ENCODE measurements at regions of chr7 and their contacts with region 1.

Region 1: DNA sequence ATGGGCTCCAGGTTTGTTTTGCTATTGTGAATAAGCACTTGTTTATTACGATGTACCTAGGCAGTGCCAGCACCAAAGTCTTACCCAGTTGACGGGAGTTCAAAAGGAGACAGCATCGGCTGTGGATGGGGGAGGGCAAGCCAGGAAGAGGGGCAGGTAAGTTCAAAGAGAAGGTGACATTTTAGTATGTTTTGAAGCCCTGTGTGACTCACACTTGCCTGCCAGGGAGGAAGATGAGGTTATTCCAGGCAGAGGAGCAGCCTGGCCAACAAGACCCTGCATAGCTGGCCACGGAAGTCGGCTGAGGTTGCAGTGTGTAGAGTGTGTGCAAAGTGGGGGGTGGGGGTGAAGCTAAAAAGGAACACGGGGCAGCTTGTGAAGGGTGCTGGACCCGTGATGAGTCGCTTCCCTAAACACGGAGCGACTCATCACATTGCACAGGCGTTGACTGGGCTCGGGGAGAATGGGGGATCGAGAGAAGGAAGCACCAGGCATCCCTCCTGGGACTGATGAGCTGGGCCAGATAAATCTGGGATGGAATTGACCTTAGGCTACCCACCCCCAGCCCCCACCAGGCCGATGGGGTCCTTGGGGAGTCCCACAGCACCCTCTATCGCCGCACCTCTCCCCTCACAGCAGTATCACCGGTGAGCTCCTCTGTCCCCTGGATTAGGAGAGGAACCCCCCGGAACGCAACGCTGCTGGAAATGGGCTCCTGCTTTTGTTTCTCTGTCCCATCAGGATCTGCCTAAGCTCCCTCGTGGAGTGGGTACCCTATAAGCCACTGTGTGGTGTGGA is 97.9 kb upstream of the IKZF1 start:
- DNase-seq: peak; percentile 65
- H3K4me3 Mint-ChIP-seq: peak overlapping the region; percentile 68
- H3K27ac Mint-ChIP-seq: peak overlapping the region; percentile 93
- H3K4me1 Mint-ChIP-seq: peaks cover 98% of the 10 kb centered on the region
- H3K27me3 Mint-ChIP-seq: no peaks in the 10 kb centered on the region

Region 2: DNA sequence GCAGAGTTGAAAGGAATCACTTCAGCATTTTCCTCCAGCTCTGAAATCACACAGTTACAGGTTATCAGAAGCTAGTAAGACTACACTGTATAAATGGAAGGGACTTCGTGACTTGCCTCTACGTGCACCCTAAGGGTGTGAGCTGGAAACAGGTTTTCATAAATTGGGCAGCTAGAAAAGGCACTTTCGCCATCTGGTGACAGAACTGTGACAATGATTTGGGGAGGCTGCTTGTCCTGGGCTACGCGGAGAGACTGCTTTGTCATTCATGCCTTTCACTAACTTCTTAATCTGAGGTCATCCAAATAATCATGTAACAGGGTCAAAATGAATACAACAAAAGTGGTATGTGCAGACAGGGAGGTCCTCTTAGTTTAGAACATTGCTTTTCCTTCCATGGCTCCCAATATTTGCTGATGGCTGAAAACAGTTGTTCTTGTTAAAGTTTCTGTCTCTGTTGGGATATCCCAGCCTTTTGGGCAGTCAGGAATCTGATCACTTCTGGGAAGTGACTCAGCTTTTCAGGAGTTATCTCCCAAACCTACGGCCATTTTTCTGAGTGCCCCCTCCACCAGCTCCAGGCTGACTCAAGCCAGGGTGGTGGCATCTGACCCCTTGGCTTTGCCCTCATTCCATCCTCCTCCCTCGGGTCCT is 415.4 kb before region 1 on chr7:
- intact Hi-C with region 1: no loop called
- DNase-seq: no peak
- H3K4me3 Mint-ChIP-seq: no peak overlapping the region
- H3K27ac Mint-ChIP-seq: no peak overlapping the region
- H3K4me1 Mint-ChIP-seq: no peaks in the 10 kb centered on the region
- H3K27me3 Mint-ChIP-seq: peaks cover 2% of the 10 kb centered on the region

Region 3: DNA sequence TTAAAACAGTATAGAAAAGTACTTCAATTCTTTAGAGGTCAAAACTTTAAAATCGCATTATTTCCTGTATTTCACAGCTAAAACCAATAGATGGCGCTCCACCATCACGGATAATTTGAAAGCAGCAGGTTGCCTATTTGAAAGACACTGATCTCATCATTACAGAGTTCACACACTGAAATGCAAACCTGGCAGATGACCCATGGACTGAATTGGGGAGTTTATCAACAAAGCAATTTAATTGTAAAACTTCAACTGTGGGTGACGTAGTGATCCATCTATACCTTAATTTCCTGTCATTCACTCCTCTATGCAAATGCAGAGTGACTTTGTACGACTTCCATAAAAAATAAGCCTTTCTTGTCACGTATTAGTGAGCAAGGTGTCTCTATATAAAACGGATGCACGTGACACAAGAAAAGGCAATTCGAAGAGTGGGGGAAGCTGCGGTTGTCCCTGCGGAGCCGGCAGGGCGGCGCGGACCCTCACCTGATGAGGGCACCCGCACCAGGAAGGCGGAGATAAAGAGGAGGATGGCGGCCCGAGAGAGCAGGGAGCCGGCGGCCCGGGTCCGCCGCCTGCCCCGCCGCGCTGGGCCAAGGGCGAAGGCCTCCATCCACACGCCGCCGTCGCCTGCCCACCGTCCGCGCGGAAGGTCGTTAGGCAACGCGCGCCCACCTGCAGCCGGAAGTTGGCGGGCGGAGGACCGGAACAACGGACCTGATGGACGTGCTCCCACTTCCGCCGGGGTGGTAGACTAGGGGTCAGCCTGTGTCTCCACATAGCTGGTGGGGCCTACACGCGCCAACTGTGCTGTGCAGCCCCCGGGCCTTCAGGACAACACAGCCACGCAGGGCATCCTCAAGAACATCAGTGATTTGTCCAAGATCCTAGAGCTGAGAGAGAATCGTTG is 113.8 kb before region 1 on chr7 and contains the start of gene ZPBP:
- intact Hi-C with region 1: loop called (anchors 5 kb)
- DNase-seq: peak; percentile 43
- H3K4me3 Mint-ChIP-seq: peak within 1 kb of the TSS; percentile 81
- H3K27ac Mint-ChIP-seq: peak within 1 kb of the TSS; percentile 68
- H3K4me1 Mint-ChIP-seq: peaks cover 4% of the 10 kb centered on the region
- H3K27me3 Mint-ChIP-seq: peaks cover 9% of the 10 kb centered on the region
- total RNA-seq, gene ZPBP: not detected in 2 replicates

Region 4: GRCh38 chr7:50227726-50228125 is 21.1 kb after region 1 on chr7:
- intact Hi-C with region 1: loop called (anchors 1 kb)
- DNase-seq: no peak
- H3K4me3 Mint-ChIP-seq: peak overlapping the region; percentile 52
- H3K27ac Mint-ChIP-seq: peak overlapping the region; percentile 91
- H3K4me1 Mint-ChIP-seq: peaks cover 46% of the 10 kb centered on the region
- H3K27me3 Mint-ChIP-seq: no peaks in the 10 kb centered on the region

Region 5: DNA sequence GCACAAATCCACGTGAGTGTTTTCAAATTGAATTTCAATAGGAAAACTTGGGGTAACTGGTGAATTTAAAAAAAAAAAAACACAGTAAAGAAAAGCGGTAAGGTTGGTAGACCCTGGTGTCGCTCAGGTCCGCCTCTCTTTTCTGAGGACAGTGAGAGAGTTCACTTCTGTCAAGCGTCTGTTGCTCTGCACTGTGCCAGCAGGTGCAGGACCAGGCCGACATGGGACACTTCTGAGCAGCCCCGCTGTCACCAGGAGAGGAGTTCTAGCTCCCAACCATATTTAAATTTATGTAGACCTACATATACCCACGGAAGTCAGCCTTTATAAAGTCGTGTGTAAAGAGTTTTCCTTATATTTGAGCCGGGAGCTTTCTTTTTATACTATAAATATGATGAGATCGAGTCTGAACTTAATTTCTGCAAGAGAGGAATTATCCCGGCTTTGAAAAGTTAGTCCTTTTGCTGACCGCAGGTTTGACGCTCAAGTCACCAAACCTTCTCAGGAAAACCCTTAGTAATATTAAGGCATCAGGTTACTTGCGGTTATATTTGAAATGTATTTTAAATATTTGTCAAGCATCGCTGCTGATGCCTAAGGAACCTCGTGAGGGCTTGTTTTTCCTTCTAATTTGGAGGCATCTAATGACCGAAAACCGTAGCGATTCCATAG is 98.4 kb after region 1 on chr7:
- intact Hi-C with region 1: loop called (anchors 1 kb)
- DNase-seq: no peak
- H3K4me3 Mint-ChIP-seq: peak overlapping the region; percentile 99
- H3K27ac Mint-ChIP-seq: peak overlapping the region; percentile 98
- H3K4me1 Mint-ChIP-seq: peaks cover 52% of the 10 kb centered on the region
- H3K27me3 Mint-ChIP-seq: no peaks in the 10 kb centered on the region

Region 6: DNA sequence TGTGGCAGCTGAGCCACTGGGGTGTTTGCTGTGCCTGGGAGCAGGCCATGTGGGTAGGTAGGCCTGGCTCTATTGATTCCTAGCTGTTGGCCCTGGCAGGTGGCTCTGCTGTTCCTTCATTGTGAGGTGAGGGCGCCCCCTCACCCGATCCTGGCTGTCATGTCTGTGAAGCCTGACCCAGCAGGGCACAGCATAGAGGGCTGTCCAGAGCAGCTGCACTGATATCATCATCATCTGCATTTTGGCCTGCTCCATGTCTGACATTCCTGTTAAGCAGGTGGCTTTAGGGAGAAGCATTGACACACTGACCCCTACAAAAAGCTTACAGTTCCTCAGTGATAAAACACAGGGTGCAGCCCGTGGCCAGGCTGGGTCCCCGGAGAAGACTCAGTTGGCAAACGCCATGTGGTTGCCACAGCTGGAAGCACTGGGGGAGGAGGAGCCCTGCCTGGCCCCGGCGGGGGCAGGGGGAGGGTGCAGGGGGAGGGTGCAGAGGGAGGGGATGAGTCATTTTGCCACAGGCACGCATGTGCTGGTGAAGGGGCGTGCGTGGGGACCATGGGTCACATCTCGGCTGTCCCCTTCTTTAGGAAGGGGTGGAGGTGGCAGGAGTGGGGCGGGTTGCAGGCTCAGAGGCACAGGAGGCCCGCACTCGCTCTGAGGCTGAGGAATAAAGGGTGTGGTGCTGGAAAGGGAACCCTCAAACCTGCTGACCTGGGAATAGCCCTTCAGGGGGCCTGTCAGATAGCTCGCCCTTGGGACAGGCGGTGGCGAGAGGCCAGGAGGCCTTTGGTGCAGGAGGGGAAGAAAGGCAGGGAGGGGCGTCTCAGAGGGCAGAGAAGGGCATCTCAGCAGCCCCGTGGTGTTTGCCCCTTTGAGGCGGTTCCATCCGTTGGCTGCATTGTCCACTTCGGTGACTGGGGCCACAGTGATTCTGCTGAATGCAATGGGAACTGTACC is 129.4 kb after region 1 on chr7:
- intact Hi-C with region 1: loop called (anchors 1 kb)
- DNase-seq: peak; percentile 71
- H3K4me3 Mint-ChIP-seq: no peak overlapping the region
- H3K27ac Mint-ChIP-seq: no peak overlapping the region
- H3K4me1 Mint-ChIP-seq: peaks cover 33% of the 10 kb centered on the region
- H3K27me3 Mint-ChIP-seq: no peaks in the 10 kb centered on the region

Region 7: DNA sequence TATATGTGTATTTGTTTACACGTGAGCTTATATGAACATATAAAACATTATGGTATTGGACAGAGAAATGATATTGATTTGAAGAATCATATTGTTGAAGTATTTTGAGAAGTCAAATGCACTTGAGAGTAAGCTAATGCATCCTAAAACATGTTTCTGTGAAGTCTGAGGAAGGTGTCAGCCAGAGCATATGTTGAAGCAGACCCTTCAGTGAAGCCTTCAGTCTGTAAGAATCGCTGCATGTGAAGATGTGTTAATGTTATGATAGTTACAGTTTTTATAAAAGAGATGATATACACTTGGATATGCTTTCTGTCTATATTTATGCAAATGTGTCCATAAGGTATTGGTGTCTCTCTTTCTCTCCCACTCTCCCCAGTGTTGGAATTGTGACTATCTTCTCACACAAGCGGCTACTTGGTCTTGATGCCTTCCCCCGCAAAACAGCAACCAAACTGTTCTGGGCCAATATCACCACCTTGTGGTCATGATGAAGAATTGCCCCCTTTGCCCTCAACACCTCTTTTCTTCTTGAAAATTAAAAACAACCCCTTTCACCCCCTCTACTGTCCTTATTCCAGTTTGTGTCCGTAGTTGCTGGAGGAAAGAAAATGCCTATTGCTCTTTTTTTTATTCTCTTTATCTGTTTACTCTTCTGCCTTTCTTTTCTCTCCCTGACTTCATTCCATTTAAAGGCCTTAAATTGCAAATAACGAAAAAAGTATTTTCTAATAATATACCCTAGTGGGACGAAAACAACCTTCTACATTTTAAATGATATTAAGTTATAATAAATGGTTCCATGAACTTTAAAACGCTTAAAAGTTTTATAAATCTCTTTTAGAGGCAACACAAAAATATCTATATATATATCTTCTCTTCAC is 162.7 kb after region 1 on chr7:
- intact Hi-C with region 1: loop called (anchors 1 kb)
- DNase-seq: no peak
- H3K4me3 Mint-ChIP-seq: peak overlapping the region; percentile 45
- H3K27ac Mint-ChIP-seq: peak overlapping the region; percentile 85
- H3K4me1 Mint-ChIP-seq: peaks cover 100% of the 10 kb centered on the region
- H3K27me3 Mint-ChIP-seq: no peaks in the 10 kb centered on the region

Region 8: GRCh38 chr7:50418086-50418515 is 211.4 kb after region 1 on chr7:
- intact Hi-C with region 1: loop called (anchors 1 kb)
- DNase-seq: peak; percentile 64
- H3K4me3 Mint-ChIP-seq: no peak overlapping the region
- H3K27ac Mint-ChIP-seq: no peak overlapping the region
- H3K4me1 Mint-ChIP-seq: peaks cover 32% of the 10 kb centered on the region
- H3K27me3 Mint-ChIP-seq: no peaks in the 10 kb centered on the region

Region 9: GRCh38 chr7:51234139-51234538 is 1027.5 kb after region 1 on chr7:
- intact Hi-C with region 1: no loop called
- DNase-seq: no peak
- H3K4me3 Mint-ChIP-seq: no peak overlapping the region
- H3K27ac Mint-ChIP-seq: no peak overlapping the region
- H3K4me1 Mint-ChIP-seq: no peaks in the 10 kb centered on the region
- H3K27me3 Mint-ChIP-seq: no peaks in the 10 kb centered on the region

Measured in activated T-helper 1 cell treated with anti-CD3 and anti-CD28 coated beads, Interleukin-12 subunit alpha, Interleukin-12 subunit beta, Interleukin-2, Interleukin-4 antibody, amounts not matched to agents 30 ng/mL and 10 ng/mL and 1 ng/mL, durations not matched to agents 14 hours and 24 hours and 36 hours (primary cell).